ENCODE measurements at regions of chr1 and their contacts with region 1.

Region 1: GRCh38 chr1:39268112-39268581 is 63.7 kb downstream of the MACF1 start:
- DNase-seq: peak in 4 of 35 experiments; percentile 6 to 45 (median 11)
- ATAC-seq: peak in 3 of 4 experiments; percentile 55 to 62 (median 58)
- H3K4me3 ChIP-seq: no peak overlapping the region
- H3K4me3 Mint-ChIP-seq: peak overlapping the region; percentile 72 to 76 (median 73)
- H3K27ac ChIP-seq: no peak overlapping the region
- H3K27ac Mint-ChIP-seq: peak overlapping the region; percentile 69 to 93
- H3K4me1 ChIP-seq: peaks cover 8 to 28% of the 10 kb centered on the region in 2 experiments
- H3K4me1 Mint-ChIP-seq: peaks cover 78 to 90% (median 82%) of the 10 kb centered on the region in 3 donors
- H3K27me3 ChIP-seq: no peaks in the 10 kb centered on the region
- H3K27me3 Mint-ChIP-seq: no peaks in the 10 kb centered on the region

Region 2: GRCh38 chr1:39048745-39049370 is 219.3 kb before region 1 on chr1:
- CTCF ChIA-PET with region 1: interaction called in 1 of 2 experiments, 11 read pairs
- POLR2A ChIA-PET with region 1: no interaction called
- DNase-seq: no peak
- ATAC-seq: no peak
- H3K4me3 ChIP-seq: no peak overlapping the region
- H3K4me3 Mint-ChIP-seq: no peak overlapping the region
- H3K27ac ChIP-seq: no peak overlapping the region
- H3K27ac Mint-ChIP-seq: no peak overlapping the region
- H3K4me1 ChIP-seq: no peaks in the 10 kb centered on the region
- H3K4me1 Mint-ChIP-seq: peaks cover 5 to 9% (median 5%) of the 10 kb centered on the region in 3 donors
- H3K27me3 ChIP-seq: no peaks in the 10 kb centered on the region
- H3K27me3 Mint-ChIP-seq: no peaks in the 10 kb centered on the region

Region 3: GRCh38 chr1:39132505-39133339 is 135.4 kb before region 1 on chr1:
- CTCF ChIA-PET with region 1: no interaction called
- POLR2A ChIA-PET with region 1: interaction called in 1 of 2 experiments, 13 read pairs
- DNase-seq: no peak
- ATAC-seq: no peak
- H3K4me3 ChIP-seq: no peak overlapping the region
- H3K4me3 Mint-ChIP-seq: no peak overlapping the region
- H3K27ac ChIP-seq: no peak overlapping the region
- H3K27ac Mint-ChIP-seq: no peak overlapping the region
- H3K4me1 ChIP-seq: no peaks in the 10 kb centered on the region
- H3K4me1 Mint-ChIP-seq: peaks cover 0 to 8% (median 6%) of the 10 kb centered on the region in 3 donors
- H3K27me3 ChIP-seq: no peaks in the 10 kb centered on the region
- H3K27me3 Mint-ChIP-seq: no peaks in the 10 kb centered on the region

Measured in T-cell (primary cell).